ENCODE measurements at regions of chr13 and their contacts with region 1.

Region 1: DNA sequence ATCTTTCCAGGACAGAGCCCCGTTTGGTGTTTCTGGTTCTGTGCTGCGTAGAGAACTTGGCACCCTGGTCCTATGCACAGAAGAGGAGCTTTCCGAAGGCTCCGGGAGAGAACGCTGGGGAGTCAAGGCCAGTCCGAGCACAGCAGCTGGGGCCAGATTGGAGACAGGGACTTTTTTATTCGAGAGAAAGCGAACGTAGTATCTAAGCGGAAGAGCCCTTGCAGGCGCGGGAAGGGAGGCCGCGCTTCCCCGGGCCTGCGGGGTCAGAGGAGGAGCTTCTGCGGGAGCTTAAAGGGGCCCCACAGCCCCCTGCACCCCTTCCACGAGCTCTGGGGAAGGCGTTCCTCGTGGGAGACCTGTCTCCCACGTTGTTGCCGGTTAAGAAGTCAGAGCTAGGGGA is 48.6 kb upstream of the ARHGEF7 start:
- DNase-seq: no peak
- ATAC-seq: no peak
- H3K4me3 ChIP-seq: no peak overlapping the region
- H3K4me3 Mint-ChIP-seq: peak overlapping the region; percentile 80
- H3K27ac ChIP-seq: no peak overlapping the region
- H3K27ac Mint-ChIP-seq: no peak overlapping the region
- H3K4me1 ChIP-seq: peaks cover 13% of the 10 kb centered on the region
- H3K4me1 Mint-ChIP-seq: peaks cover 9% of the 10 kb centered on the region
- H3K27me3 ChIP-seq: peaks cover 20 to 37% of the 10 kb centered on the region in 2 experiments
- H3K27me3 Mint-ChIP-seq: peaks cover 65% of the 10 kb centered on the region
- CTCF ChIP-seq: no peak

Region 2: DNA sequence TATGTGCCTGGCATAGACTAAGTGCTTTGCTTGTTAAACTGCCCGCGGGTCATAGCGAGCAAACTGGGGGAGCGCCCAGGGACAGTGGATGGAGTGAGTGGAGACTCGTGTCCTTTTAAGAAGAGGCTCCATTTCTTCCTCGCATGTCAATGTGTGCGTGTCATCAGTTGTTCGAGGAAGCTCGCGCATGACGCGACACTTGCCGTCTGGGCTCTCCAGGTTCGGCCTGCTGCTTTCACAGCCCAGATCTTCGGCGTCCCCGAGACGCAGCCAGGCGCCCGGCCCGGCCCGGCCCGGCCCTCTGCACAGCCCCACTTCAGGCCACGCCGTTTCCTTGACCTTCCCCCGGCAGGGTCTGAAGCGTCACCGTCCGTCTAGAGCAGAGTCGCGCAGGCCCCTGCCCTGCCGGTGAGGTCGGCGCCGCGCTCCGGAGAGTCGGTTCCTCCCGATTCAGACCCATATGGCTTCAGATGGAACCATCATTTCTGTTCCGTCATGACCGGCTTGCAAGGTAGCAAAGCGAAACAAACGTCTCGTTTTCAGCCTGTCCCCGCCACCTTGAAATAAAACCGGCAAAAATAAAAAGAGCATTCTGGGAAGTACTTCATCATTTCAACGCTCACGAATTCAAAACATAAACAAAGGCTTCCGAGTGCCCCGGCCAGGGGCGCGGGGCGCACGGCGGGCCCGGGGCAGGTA is 48.0 kb after region 1 on chr13:
- CTCF ChIA-PET with region 1: interaction called, 3 read pairs
- POLR2A ChIA-PET with region 1: no interaction called
- intact Hi-C with region 1: loop called in 1 of 2 experiments (anchors 5 kb)
- DNase-seq: peak in 6 of 14 experiments; percentile 8 to 56 (median 18)
- ATAC-seq: peak; percentile 74
- H3K4me3 ChIP-seq: peak overlapping the region; percentile 55
- H3K4me3 Mint-ChIP-seq: peak overlapping the region; percentile 87
- H3K27ac ChIP-seq: no peak overlapping the region
- H3K27ac Mint-ChIP-seq: no peak overlapping the region
- H3K4me1 ChIP-seq: peaks cover 17% of the 10 kb centered on the region
- H3K4me1 Mint-ChIP-seq: peaks cover 16% of the 10 kb centered on the region
- H3K27me3 ChIP-seq: peaks cover 51 to 58% of the 10 kb centered on the region in 2 experiments
- H3K27me3 Mint-ChIP-seq: peaks cover 89% of the 10 kb centered on the region
- CTCF ChIP-seq: no peak

Region 3: DNA sequence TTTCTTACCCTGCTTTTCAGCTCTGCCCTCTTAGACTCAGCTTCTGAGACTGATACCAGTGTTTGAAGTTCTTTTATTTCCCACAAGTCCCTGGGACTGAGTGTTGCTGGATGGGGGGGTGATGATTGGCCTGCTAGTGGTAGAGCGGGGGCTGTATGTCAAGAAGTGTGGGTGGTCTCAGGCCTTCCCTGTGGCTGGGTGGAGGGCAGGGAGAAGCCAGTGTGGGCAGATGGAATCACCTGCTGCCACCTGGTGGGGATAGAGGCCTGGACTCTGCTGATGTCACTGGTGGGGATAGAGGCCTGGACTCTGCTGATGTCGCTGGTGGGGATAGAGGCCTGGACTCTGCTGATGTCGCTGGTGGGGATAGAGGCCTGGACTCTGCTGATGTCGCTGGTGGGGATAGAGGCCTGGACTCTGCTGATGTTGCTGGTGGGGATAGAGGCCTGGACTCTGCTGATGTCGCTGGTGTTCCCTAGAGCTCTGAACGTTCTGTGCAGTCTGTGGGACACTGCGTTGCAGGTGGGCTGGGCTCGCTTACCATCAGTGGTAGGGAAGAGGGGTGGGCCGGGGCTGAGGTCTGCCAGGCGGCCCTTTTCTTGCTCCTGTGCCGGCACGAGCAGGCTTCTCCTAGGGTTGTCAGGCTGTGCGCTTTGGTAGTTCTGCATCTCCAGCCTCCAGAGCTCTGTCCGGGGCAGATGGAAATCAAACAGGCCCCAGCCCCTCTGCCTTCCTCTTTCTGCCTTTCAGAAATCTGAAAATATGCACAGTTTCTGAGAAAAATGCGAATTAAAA is 149.8 kb after region 1 on chr13:
- CTCF ChIA-PET with region 1: interaction called, 12 read pairs
- POLR2A ChIA-PET with region 1: interaction called, 6 read pairs
- intact Hi-C with region 1: loop called (anchors 1 to 2 kb)
- DNase-seq: peak; percentile 19 to 68 (median 38)
- ATAC-seq: peak; percentile 69
- H3K4me3 ChIP-seq: no peak overlapping the region
- H3K4me3 Mint-ChIP-seq: no peak overlapping the region
- H3K27ac ChIP-seq: no peak overlapping the region
- H3K27ac Mint-ChIP-seq: peak overlapping the region; percentile 73
- H3K4me1 ChIP-seq: peaks cover 7% of the 10 kb centered on the region
- H3K4me1 Mint-ChIP-seq: peaks cover 64% of the 10 kb centered on the region
- H3K27me3 ChIP-seq: no peaks in the 10 kb centered on the region
- H3K27me3 Mint-ChIP-seq: no peaks in the 10 kb centered on the region
- CTCF ChIP-seq: peak; percentile 65

Region 4: DNA sequence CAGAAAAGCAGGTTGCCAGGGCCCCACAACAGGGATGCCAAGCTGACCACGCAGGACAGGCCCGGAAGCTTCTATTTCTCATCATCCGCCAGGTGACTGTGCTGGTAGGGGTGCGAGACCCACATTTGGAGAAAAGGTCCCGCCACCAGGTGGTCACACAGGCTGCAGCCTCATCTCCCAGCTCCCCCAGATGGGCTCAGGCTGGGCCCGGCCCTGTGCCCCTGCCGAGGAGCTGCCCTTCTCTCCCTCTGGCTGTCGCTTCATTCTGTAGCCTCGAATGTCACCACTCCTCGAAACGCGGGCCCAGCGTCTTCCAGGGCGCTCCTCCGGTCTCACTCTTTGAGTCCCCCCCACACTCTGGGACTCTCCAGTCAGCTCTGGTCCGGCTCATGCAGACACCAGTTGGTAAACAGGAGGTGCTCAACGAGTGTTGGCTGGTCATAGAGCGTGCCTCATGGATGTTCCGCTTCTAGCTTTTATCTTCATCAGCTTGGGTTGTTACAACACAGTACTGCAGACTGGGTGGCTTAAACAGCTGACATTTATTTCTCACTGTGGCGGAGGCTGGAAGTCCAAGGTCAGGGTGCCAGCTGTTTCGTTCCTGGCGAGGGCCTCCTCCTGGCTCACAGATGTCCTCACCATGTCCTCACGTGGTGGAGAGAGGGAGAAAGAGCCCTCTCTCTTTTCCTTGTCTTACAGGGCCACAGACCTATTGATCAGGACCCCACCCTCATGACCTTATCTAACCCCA is 341.0 kb after region 1 on chr13:
- CTCF ChIA-PET with region 1: no interaction called
- POLR2A ChIA-PET with region 1: no interaction called
- intact Hi-C with region 1: loop called in 1 of 2 experiments (anchors 5 kb)
- DNase-seq: no peak
- ATAC-seq: no peak
- H3K4me3 ChIP-seq: no peak overlapping the region
- H3K4me3 Mint-ChIP-seq: no peak overlapping the region
- H3K27ac ChIP-seq: no peak overlapping the region
- H3K27ac Mint-ChIP-seq: no peak overlapping the region
- H3K4me1 ChIP-seq: no peaks in the 10 kb centered on the region
- H3K4me1 Mint-ChIP-seq: no peaks in the 10 kb centered on the region
- H3K27me3 ChIP-seq: peaks cover 6 to 9% of the 10 kb centered on the region in 2 experiments
- H3K27me3 Mint-ChIP-seq: peaks cover 8% of the 10 kb centered on the region
- CTCF ChIP-seq: no peak

Region 5: GRCh38 chr13:112606109-112607001 is 1539.8 kb after region 1 on chr13:
- CTCF ChIA-PET with region 1: no interaction called
- POLR2A ChIA-PET with region 1: no interaction called
- intact Hi-C with region 1: loop called in 1 of 2 experiments (anchors 10 kb)
- DNase-seq: peak; percentile 64 to 92 (median 82)
- ATAC-seq: peak; percentile 97
- H3K4me3 ChIP-seq: peak overlapping the region; percentile 53
- H3K4me3 Mint-ChIP-seq: peak overlapping the region; percentile 90
- H3K27ac ChIP-seq: no peak overlapping the region
- H3K27ac Mint-ChIP-seq: no peak overlapping the region
- H3K4me1 ChIP-seq: peaks cover 12% of the 10 kb centered on the region
- H3K4me1 Mint-ChIP-seq: peaks cover 9% of the 10 kb centered on the region
- H3K27me3 ChIP-seq: no peaks in the 10 kb centered on the region
- H3K27me3 Mint-ChIP-seq: peaks cover 51% of the 10 kb centered on the region
- CTCF ChIP-seq: peak; percentile 97